H1 (cell line): ENCODE measurements at regions of chr12 and their contacts with region 1.

Region 1: DNA sequence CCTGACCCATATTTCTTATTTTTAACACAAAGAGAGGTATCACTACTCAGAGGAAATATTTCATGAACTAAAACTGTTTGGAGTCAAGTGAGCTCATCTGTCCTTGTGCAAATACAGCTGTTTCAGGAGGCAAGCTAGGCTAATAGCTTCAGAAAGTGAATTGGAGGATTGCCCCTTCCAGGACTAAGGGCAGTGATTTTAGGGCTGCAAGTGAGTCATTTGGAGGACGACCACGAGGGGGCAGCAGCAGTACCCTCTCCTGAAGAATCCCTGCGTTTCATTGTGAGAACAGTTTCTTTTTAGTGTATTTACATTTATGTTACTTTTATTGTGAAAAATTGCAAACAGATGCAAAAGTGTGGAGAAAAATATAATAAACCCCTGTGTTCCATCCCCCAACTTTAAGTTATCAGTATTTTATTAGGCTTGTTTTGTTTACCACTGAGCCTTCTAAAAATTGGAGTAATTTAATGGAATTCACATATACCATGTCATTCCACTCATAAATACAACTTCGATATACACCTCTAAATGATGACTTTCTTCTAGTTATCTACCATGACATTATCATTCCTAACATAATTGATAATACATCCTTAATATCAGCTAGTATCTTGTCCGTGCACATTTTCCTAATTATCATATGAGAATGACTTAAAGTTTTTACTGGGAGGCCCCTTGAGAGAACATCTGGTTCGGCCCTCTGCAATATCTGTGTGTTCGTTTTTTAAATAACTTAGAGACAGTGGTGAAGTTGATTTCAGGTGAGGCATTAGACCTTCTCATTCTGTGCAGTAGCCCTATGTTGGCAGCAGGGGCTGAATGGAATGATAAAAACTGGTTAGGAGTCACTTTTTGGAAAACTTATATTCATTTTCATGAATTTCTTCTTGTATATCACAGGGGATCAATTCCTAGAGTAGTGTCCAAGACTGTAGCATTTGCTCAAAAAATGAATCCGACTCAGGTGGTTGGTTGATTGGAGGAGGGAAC is 13.7 kb downstream of the FOXJ2 start:
- DNase-seq: peak in 1 of 2 experiments; percentile 91
- H3K4me3 ChIP-seq: no peak overlapping the region
- H3K27ac ChIP-seq: no peak overlapping the region
- H3K4me1 ChIP-seq: no peaks in the 10 kb centered on the region
- H3K27me3 ChIP-seq: no peaks in the 10 kb centered on the region
- CTCF ChIP-seq: peak; percentile 81 to 91 (median 84)
- EP300 ChIP-seq: no peak
- POLR2A ChIP-seq: no peak
- RAD21 ChIP-seq: peak; percentile 63 to 71

Region 2: DNA sequence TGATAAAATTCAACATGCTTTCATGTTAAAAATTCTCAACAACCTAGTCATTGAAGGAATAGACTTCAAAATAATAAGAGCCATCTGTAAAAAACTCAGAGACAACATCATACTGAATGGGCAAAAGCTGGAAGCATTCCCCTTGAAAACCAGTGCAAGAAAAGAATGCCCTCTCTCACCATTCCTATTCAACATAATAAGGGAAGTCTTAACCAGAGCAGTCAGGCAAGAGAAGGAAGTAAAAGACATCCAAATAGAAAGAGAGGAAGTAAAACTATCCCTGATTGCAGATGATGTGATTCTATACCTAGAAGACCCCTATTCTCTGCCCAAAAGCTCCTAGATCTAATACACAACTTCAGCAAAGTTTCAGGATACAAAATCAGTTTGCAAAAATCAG is 433.4 kb before region 1 on chr12:
- CTCF ChIA-PET with region 1: no interaction called
- POLR2A ChIA-PET with region 1: no interaction called
- DNase-seq: no peak
- H3K4me3 ChIP-seq: no peak overlapping the region
- H3K27ac ChIP-seq: no peak overlapping the region
- H3K4me1 ChIP-seq: peaks cover 0 to 4% (median 0%) of the 10 kb centered on the region in 4 experiments; a peak in 1 of 7 replicates
- H3K27me3 ChIP-seq: no peaks in the 10 kb centered on the region
- CTCF ChIP-seq: no peak
- EP300 ChIP-seq: no peak
- POLR2A ChIP-seq: no peak
- RAD21 ChIP-seq: no peak

Region 3: GRCh38 chr12:7832059-7832696 is 214.1 kb before region 1 on chr12:
- CTCF ChIA-PET with region 1: no interaction called
- POLR2A ChIA-PET with region 1: no interaction called
- DNase-seq: no peak
- H3K4me3 ChIP-seq: no peak overlapping the region
- H3K27ac ChIP-seq: no peak overlapping the region
- H3K4me1 ChIP-seq: no peaks in the 10 kb centered on the region; a peak in 1 of 7 replicates
- H3K27me3 ChIP-seq: no peaks in the 10 kb centered on the region
- CTCF ChIP-seq: peak; percentile 36 to 81 (median 65)
- EP300 ChIP-seq: no peak
- POLR2A ChIP-seq: no peak
- RAD21 ChIP-seq: peak; percentile 72 to 78

Region 4: GRCh38 chr12:7995266-7995963 is 50.8 kb before region 1 on chr12:
- CTCF ChIA-PET with region 1: no interaction called
- POLR2A ChIA-PET with region 1: no interaction called
- DNase-seq: peak; percentile 38 to 74
- H3K4me3 ChIP-seq: no peak overlapping the region
- H3K27ac ChIP-seq: no peak overlapping the region
- H3K4me1 ChIP-seq: peaks cover 0 to 6% (median 2%) of the 10 kb centered on the region in 4 experiments; a peak in 5 of 7 replicates
- H3K27me3 ChIP-seq: no peaks in the 10 kb centered on the region
- CTCF ChIP-seq: peak; percentile 52 to 85 (median 75)
- EP300 ChIP-seq: no peak
- POLR2A ChIP-seq: no peak
- RAD21 ChIP-seq: peak; percentile 81

Region 5: DNA sequence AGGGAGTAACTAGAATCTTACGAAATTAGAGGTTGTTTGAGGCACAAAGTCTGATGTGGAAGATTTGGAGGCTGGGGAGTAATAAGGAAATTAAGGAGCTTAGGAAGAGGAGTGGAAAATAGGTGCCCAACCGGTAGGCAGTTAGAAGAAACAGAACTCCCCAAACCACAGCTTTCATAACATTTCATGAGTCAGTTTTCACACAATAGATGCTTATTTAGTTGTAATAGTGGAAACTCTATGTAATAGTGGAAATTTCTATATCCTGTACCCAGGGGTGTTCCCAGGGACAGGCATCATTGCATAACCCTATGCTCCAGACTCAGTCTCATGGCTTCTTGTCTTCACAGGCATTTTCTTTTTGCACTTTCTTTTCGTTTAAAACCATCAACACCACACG is 11.6 kb after region 1 on chr12:
- CTCF ChIA-PET with region 1: interaction called, 30 read pairs
- POLR2A ChIA-PET with region 1: no interaction called
- DNase-seq: no peak
- H3K4me3 ChIP-seq: no peak overlapping the region
- H3K27ac ChIP-seq: no peak overlapping the region
- H3K4me1 ChIP-seq: no peaks in the 10 kb centered on the region
- H3K27me3 ChIP-seq: no peaks in the 10 kb centered on the region
- CTCF ChIP-seq: no peak
- EP300 ChIP-seq: no peak
- POLR2A ChIP-seq: no peak
- RAD21 ChIP-seq: no peak

Region 6: GRCh38 chr12:8065991-8066594 is 19.8 kb after region 1 on chr12 and contains the start of gene C3AR1:
- CTCF ChIA-PET with region 1: interaction called, 146 read pairs
- POLR2A ChIA-PET with region 1: no interaction called
- DNase-seq: no peak
- H3K4me3 ChIP-seq: no peak within 1 kb of the TSS
- H3K27ac ChIP-seq: no peak within 1 kb of the TSS
- H3K4me1 ChIP-seq: no peaks in the 10 kb centered on the region
- H3K27me3 ChIP-seq: no peaks in the 10 kb centered on the region
- CTCF ChIP-seq: no peak
- EP300 ChIP-seq: no peak
- POLR2A ChIP-seq: no peak
- RAD21 ChIP-seq: no peak
- total RNA-seq, gene C3AR1: not detected in 2 replicates

Region 7: GRCh38 chr12:8123124-8123912 is 77.1 kb after region 1 on chr12 and contains the start of gene CLEC4A:
- CTCF ChIA-PET with region 1: no interaction called
- POLR2A ChIA-PET with region 1: no interaction called
- DNase-seq: no peak
- H3K4me3 ChIP-seq: no peak within 1 kb of the TSS
- H3K27ac ChIP-seq: no peak within 1 kb of the TSS
- H3K4me1 ChIP-seq: peaks cover 0 to 4% (median 3%) of the 10 kb centered on the region in 4 experiments; a peak in 2 of 7 replicates
- H3K27me3 ChIP-seq: no peaks in the 10 kb centered on the region
- CTCF ChIP-seq: no peak
- EP300 ChIP-seq: no peak
- POLR2A ChIP-seq: no peak
- RAD21 ChIP-seq: no peak
- total RNA-seq, gene CLEC4A: 0.41 TPM in 1 of 2 replicates, not detected in the other